ENCODE measurements at regions of chr10 and their contacts with region 1.

Region 1: GRCh38 chr10:10824591-10825148 is 193.0 kb upstream of the CELF2 start:
- DNase-seq: peak; percentile 63
- ATAC-seq: peak; percentile 89

Region 2: GRCh38 chr10:10598297-10598696 is 226.4 kb before region 1 on chr10:
- intact Hi-C with region 1: no loop called
- DNase-seq: no peak
- ATAC-seq: no peak

Region 3: DNA sequence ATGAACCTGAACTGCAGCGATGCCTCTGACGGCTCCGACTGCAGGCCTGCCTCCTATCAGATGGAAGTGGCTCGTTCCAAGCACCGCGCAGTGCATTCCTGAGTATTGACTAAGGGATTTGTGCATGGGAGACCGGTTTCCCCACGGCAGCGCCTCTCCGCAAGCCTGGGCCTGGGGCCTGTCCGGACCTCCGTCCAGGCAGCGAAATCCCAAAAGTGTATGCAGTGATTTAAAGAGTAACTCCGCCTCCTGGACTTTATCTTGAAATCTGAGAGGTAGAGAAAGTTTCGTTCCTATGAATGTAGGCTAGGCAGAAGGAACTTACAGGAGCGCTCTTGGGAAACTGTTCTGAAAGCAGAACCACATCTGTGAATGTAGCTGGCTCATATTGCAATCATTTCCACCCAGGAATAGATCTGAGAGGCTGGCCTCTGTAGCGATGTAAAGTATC is 86.8 kb after region 1 on chr10:
- intact Hi-C with region 1: loop called (anchors 10 kb)
- DNase-seq: peak; percentile 76
- ATAC-seq: peak; percentile 71

Region 4: DNA sequence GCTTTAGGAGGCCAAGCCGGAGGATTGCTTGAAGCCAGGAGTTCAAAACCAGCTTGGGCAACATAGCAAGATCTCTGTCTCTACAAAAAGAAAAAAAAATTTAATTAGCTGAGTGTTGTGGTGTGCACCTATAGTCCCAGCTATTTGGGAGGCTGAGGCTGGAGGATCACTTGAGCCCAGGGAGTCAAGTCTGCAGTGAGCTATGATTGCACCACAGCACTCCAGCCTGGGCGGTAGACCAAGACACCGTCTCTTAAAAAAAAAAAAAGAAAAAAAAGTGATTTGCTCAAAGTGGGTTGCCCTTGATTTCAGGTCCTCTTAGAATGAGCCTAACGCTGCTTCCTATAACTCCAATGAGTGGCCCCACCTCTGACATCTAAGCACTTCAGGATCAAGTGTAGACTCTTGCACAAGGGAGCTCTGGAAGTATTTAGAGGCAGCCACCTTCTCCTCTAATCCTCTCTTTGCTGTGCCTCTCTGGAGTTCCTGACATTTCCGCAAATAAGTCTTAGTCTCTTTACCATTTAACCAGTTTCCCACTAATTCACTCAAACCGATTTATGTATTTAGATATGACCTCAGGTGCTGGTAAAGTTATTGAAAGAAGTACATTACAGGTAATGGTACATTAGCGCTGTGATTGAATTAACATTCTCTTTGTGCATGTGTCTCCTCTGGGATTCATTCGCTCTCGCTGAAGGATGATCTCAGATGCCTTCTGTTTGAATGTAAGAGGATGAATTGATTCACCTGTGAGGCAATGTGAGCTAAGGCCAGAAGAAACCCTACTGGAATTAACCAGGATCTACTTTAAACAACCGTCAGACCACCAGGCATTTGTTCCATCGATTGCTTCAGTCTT is 132.2 kb after region 1 on chr10:
- intact Hi-C with region 1: no loop called
- DNase-seq: no peak
- ATAC-seq: no peak

Measured in Right ventricle myocardium superior (tissue), 1 donor.